B cell (primary cell): ENCODE measurements at regions of chr14 and their contacts with region 1.

Region 1: GRCh38 chr14:105700622-105701288 is 174.4 kb downstream of the TMEM121 start:
- DNase-seq: peak; percentile 77
- ATAC-seq: no peak
- H3K4me3 ChIP-seq: peak overlapping the region in 1 of 5 experiments; percentile 42
- H3K4me3 Mint-ChIP-seq: peak overlapping the region; percentile 71
- H3K27ac ChIP-seq: peak overlapping the region; percentile 87 to 92
- H3K27ac Mint-ChIP-seq: peak overlapping the region; percentile 97
- H3K4me1 ChIP-seq: peaks cover 49 to 65% of the 10 kb centered on the region in 2 donors
- H3K4me1 Mint-ChIP-seq: peaks cover 49% of the 10 kb centered on the region
- H3K27me3 ChIP-seq: no peaks in the 10 kb centered on the region
- H3K27me3 Mint-ChIP-seq: no peaks in the 10 kb centered on the region
- CTCF ChIP-seq: no peak

Region 2: GRCh38 chr14:105581551-105582341 is 119.0 kb before region 1 on chr14:
- CTCF ChIA-PET with region 1: no interaction called
- POLR2A ChIA-PET with region 1: interaction called, 6 read pairs
- intact Hi-C with region 1: loop called (anchors 2 kb)
- DNase-seq: peak; percentile 63
- ATAC-seq: no peak
- H3K4me3 ChIP-seq: no peak overlapping the region
- H3K4me3 Mint-ChIP-seq: peak overlapping the region; percentile 71
- H3K27ac ChIP-seq: peak overlapping the region; percentile 75
- H3K27ac Mint-ChIP-seq: peak overlapping the region; percentile 99
- H3K4me1 ChIP-seq: peaks cover 52 to 76% of the 10 kb centered on the region in 2 donors
- H3K4me1 Mint-ChIP-seq: peaks cover 54% of the 10 kb centered on the region
- H3K27me3 ChIP-seq: no peaks in the 10 kb centered on the region
- H3K27me3 Mint-ChIP-seq: no peaks in the 10 kb centered on the region
- CTCF ChIP-seq: no peak

Region 3: GRCh38 chr14:105682940-105683570 is 17.7 kb before region 1 on chr14:
- CTCF ChIA-PET with region 1: no interaction called
- POLR2A ChIA-PET with region 1: no interaction called
- intact Hi-C with region 1: no loop called
- DNase-seq: peak; percentile 44
- ATAC-seq: no peak
- H3K4me3 ChIP-seq: no peak overlapping the region
- H3K4me3 Mint-ChIP-seq: peak overlapping the region; percentile 78
- H3K27ac ChIP-seq: peak overlapping the region; percentile 85 to 98
- H3K27ac Mint-ChIP-seq: peak overlapping the region; percentile 97
- H3K4me1 ChIP-seq: peaks cover 48 to 74% of the 10 kb centered on the region in 2 donors
- H3K4me1 Mint-ChIP-seq: peaks cover 40% of the 10 kb centered on the region
- H3K27me3 ChIP-seq: no peaks in the 10 kb centered on the region
- H3K27me3 Mint-ChIP-seq: no peaks in the 10 kb centered on the region
- CTCF ChIP-seq: no peak

Region 4: GRCh38 chr14:105748194-105748578 is 47.4 kb after region 1 on chr14:
- CTCF ChIA-PET with region 1: no interaction called
- POLR2A ChIA-PET with region 1: no interaction called
- intact Hi-C with region 1: no loop called
- DNase-seq: no peak
- ATAC-seq: peak; percentile 66
- H3K4me3 ChIP-seq: peak overlapping the region in 4 of 5 experiments; percentile 33 to 56 (median 52)
- H3K4me3 Mint-ChIP-seq: peak overlapping the region; percentile 95
- H3K27ac ChIP-seq: peak overlapping the region in 1 of 2 donors; percentile 49
- H3K27ac Mint-ChIP-seq: peak overlapping the region; percentile 97
- H3K4me1 ChIP-seq: peaks cover 34 to 41% of the 10 kb centered on the region in 2 donors
- H3K4me1 Mint-ChIP-seq: peaks cover 23% of the 10 kb centered on the region
- H3K27me3 ChIP-seq: no peaks in the 10 kb centered on the region
- H3K27me3 Mint-ChIP-seq: no peaks in the 10 kb centered on the region
- CTCF ChIP-seq: no peak